PC-9 (cell line): ENCODE measurements at regions of chr19 and their contacts with region 1.

Region 1: DNA sequence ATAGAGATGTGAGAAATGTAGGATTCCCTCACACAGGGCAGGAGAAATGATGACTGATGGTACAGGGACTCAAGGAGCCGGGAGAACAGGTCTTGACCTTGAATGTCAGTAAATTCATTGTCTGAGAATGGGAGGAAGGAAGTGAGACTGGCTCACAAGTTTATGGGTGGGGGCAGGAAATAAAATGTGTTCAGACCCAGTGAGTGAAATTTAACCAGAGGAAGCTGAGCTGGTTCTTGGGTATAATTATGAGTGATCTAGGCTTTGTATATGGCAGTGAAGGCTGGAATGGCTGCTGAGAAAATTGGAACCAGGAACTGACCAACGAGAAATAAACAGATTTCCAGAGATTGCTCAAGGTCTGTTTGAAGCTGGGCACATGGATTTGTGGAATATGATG is 6.3 kb upstream of the IGSF23 start:
- DNase-seq: peak in 1 of 2 experiments; percentile 80
- H3K4me3 ChIP-seq: no peak overlapping the region
- H3K27ac ChIP-seq: peak overlapping the region; percentile 54
- H3K4me1 ChIP-seq: peaks cover 50% of the 10 kb centered on the region
- H3K27me3 ChIP-seq: no peaks in the 10 kb centered on the region
- CTCF ChIP-seq: no peak

Region 2: DNA sequence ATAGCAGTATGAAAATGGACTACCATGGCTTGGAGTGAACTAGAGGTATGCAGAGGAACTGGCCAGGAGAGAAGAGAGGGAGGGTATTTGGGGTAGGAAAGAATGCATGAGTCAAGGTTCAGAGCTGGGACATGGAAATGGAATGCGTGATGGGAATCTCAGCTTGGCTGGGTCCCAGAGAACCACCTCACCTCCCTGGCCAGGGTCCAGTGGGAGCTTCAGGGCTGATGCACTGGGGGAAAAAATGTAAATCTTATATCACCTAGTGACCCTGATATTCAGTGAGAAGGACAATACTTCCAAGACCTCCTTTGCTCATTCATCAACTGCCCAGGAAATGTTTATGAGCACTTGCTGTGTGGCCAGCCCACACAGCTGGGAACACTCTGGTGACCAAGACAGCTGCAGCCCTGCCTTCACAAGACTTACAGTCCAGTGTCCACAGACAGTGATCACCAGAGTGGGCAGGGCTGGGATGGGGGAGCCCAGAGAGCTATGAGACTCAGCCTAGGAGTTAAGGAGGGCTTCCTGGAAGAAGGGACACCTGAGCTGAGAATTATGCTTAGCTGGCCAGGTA is 19.1 kb after region 1 on chr19:
- CTCF ChIA-PET with region 1: interaction called, 8 read pairs
- POLR2A ChIA-PET with region 1: interaction called, 7 read pairs
- intact Hi-C with region 1: loop called (anchors 2 kb)
- DNase-seq: peak; percentile 94 to 98
- H3K4me3 ChIP-seq: no peak overlapping the region
- H3K27ac ChIP-seq: peak overlapping the region; percentile 91
- H3K4me1 ChIP-seq: peaks cover 31% of the 10 kb centered on the region
- H3K27me3 ChIP-seq: no peaks in the 10 kb centered on the region
- CTCF ChIP-seq: no peak

Region 3: GRCh38 chr19:44635581-44636438 is 28.8 kb after region 1 on chr19:
- CTCF ChIA-PET with region 1: no interaction called
- POLR2A ChIA-PET with region 1: interaction called, 13 read pairs
- intact Hi-C with region 1: no loop called
- DNase-seq: peak in 1 of 2 experiments; percentile 58
- H3K4me3 ChIP-seq: no peak overlapping the region
- H3K27ac ChIP-seq: peak overlapping the region; percentile 35
- H3K4me1 ChIP-seq: peaks cover 46% of the 10 kb centered on the region
- H3K27me3 ChIP-seq: no peaks in the 10 kb centered on the region
- CTCF ChIP-seq: no peak

Region 4: GRCh38 chr19:44746946-44747738 is 140.1 kb after region 1 on chr19:
- CTCF ChIA-PET with region 1: no interaction called
- POLR2A ChIA-PET with region 1: interaction called, 16 read pairs
- intact Hi-C with region 1: no loop called
- DNase-seq: peak; percentile 87 to 97
- H3K4me3 ChIP-seq: peak overlapping the region; percentile 78
- H3K27ac ChIP-seq: peak overlapping the region; percentile 95
- H3K4me1 ChIP-seq: peaks cover 66% of the 10 kb centered on the region
- H3K27me3 ChIP-seq: no peaks in the 10 kb centered on the region
- CTCF ChIP-seq: no peak

Region 5: GRCh38 chr19:44800461-44800860 is 193.4 kb after region 1 on chr19:
- CTCF ChIA-PET with region 1: no interaction called
- POLR2A ChIA-PET with region 1: no interaction called
- intact Hi-C with region 1: no loop called
- DNase-seq: peak; percentile 73 to 85
- H3K4me3 ChIP-seq: no peak overlapping the region
- H3K27ac ChIP-seq: no peak overlapping the region
- H3K4me1 ChIP-seq: peaks cover 22% of the 10 kb centered on the region
- H3K27me3 ChIP-seq: no peaks in the 10 kb centered on the region
- CTCF ChIP-seq: peak; percentile 97

Region 6: DNA sequence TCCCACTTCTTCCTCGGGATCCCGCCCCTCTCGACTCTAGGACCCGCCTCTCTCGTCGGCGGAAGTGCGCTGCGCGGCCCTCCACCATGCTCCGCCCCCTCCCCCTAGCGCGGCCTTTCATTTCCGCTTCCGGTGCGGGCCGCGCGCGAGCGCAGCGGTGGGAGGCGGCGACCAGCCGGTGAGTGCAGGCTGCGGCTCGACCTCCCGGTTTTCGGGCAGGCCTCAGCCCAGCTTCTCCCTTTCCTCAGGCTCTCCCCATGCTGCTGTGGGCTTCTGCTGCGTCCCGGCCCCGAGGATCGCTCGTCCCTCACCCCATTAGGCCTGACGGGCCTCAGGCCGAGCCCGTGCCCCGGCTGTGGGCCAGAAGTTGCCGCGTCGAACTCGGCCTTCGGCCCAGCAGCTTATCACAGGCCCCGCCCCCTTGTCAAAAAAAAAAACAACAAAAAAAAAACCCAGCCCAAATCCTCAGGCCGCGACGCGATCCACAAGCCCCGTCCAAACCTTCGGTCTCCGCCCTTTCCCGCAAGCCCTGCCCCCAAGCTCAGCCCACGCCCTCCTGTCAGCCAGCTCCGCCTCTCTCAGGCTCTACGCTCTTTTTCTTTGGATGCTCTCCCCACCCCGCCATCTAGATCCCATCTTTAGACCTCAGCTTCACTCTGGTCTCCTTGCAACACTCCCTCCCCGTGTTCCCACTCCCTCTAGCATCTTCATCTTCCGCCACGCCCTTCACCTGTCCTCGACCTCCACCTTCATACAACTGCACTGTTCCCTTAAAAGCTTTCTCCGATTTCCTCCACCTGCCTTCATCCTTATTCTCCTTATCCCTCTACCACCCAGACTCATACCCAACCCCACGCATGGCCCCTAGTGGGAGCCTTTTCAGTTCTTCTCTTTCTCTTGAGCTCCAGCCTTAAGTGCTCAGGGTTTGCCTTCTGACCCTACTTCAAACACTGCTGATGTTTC is 432.2 kb after region 1 on chr19 and contains the start of gene CLASRP:
- CTCF ChIA-PET with region 1: interaction called, 10 read pairs
- POLR2A ChIA-PET with region 1: no interaction called
- intact Hi-C with region 1: no loop called
- DNase-seq: peak; percentile 77 to 90
- H3K4me3 ChIP-seq: peak within 1 kb of the TSS; percentile 100
- H3K27ac ChIP-seq: peak within 1 kb of the TSS; percentile 81
- H3K4me1 ChIP-seq: peaks cover 12% of the 10 kb centered on the region
- H3K27me3 ChIP-seq: no peaks in the 10 kb centered on the region
- CTCF ChIP-seq: no peak
- total RNA-seq, gene CLASRP: 74.1 and 76.8 TPM in 2 replicates